Dorsolateral prefrontal cortex (tissue), 120 donors: ENCODE measurements at regions of chr16 and their contacts with region 1.

Region 1: GRCh38 chr16:71214746-71215381 is 15.7 kb downstream of the HYDIN start:
- DNase-seq: no peak
- H3K4me3 ChIP-seq: no peak overlapping the region
- H3K27ac ChIP-seq: no peak overlapping the region
- H3K27me3 ChIP-seq: peaks cover 0 to 5% (median 0%) of the 10 kb centered on the region in 45 donors
- CTCF ChIP-seq: peak in 41 of 56 donors; percentile 7 to 63 (median 35)

Region 2: DNA sequence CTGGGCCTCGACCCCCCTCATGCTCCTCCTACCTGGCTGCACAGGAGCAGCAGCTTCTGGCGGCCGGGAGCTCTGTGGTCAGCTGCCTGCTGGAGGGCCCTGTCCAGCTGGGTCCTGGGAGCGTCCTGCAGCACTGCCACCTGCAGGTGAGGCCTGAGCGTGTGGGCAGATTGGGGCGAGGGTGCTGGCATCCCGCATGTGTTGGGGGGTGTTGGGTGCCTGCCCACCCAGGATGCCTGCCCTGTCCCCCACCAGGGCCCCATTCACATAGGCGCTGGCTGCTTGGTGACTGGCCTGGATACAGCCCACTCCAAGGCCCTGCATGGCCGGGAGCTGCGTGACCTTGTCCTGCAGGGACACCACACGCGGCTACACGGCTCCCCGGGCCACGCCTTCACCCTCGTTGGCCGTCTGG is 743.9 kb before region 1 on chr16:
- intact Hi-C with region 1: no loop called
- DNase-seq: peak in 1 of 10 donors; percentile 54
- H3K4me3 ChIP-seq: no peak overlapping the region
- H3K27ac ChIP-seq: no peak overlapping the region
- H3K27me3 ChIP-seq: no peaks in the 10 kb centered on the region
- CTCF ChIP-seq: peak in 45 of 56 donors; percentile 8 to 65 (median 36)

Region 3: DNA sequence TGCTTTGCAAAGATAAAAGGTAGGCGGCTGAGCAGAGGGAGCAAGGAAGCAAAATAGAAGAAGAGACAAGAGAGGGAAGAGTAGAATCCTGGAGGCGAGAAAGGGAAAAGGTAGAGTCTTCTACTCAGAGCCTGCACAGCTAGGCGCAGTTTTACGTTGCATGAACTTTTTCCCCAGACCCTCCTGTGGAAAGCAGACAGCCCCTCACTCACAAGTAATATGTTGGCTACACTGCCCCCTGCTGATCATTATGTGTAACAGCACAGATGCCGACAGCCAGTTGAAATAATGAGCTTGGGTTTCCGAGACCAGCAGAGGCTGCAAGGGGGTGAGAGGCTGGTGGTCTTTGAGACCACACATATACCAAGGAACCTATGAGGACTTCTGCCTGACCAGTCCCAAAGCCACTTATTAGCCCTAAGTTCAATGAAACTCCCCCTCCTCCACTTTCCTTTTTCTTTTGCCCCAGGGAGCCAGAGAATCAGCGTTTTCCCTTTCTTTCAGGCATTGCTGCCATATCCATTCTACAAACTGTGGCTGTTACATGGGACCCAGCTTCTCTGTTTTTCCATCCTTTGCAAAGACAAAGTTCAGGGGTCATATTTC is 96.8 kb after region 1 on chr16:
- intact Hi-C with region 1: loop called in 1 of 2 experiments (anchors 10 kb)
- DNase-seq: peak in 1 of 10 donors; percentile 34
- H3K4me3 ChIP-seq: no peak overlapping the region
- H3K27ac ChIP-seq: no peak overlapping the region
- H3K27me3 ChIP-seq: peaks cover 0 to 38% (median 7%) of the 10 kb centered on the region in 45 donors
- CTCF ChIP-seq: peak; percentile 60 to 89 (median 80)

Region 4: DNA sequence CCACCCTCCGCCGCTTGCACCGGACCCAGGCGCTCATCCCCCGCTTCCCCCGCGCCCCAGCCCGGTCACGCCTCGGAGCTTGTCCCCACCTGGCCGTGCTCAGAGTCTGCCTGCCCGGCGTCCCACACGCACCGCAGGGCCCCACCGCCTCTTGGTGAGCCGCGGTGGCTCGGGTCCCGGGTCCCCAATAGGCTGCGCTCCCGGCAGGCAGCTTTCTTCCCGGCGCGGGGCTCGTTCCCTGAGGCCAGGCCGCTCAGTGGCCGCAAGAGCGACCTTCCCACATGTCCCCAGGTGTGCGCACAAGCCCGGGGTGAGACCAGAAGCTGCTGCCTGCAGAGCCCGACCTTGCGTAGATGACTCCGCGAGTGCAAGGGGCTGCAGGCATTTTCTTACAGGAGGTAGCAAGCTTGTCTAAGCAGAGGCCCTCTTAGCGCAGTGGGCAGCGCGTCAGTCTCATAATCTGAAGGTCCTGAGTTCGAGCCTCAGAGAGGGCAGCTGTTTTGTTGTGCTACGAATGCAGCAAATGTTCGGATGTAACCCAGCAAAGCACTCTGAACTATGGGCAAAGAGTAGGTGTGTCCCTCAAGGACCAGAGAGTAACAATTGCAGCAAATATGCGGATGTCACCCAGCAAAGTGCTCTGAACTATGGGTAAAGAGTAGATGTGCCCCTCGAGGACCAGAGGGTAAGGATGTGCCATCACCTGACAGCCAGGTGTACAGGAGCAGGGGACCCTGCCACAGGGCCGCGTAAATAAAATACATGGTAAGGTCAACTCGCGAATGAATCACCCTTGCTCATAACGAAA is 211.4 kb after region 1 on chr16:
- intact Hi-C with region 1: no loop called
- DNase-seq: no peak
- H3K4me3 ChIP-seq: peak overlapping the region in 13 of 59 donors; percentile 11 to 50 (median 20)
- H3K27ac ChIP-seq: no peak overlapping the region
- H3K27me3 ChIP-seq: peaks cover 0 to 68% (median 24%) of the 10 kb centered on the region in 45 donors
- CTCF ChIP-seq: no peak